ENCODE measurements at regions of chr16 and their contacts with region 1.

Region 1: DNA sequence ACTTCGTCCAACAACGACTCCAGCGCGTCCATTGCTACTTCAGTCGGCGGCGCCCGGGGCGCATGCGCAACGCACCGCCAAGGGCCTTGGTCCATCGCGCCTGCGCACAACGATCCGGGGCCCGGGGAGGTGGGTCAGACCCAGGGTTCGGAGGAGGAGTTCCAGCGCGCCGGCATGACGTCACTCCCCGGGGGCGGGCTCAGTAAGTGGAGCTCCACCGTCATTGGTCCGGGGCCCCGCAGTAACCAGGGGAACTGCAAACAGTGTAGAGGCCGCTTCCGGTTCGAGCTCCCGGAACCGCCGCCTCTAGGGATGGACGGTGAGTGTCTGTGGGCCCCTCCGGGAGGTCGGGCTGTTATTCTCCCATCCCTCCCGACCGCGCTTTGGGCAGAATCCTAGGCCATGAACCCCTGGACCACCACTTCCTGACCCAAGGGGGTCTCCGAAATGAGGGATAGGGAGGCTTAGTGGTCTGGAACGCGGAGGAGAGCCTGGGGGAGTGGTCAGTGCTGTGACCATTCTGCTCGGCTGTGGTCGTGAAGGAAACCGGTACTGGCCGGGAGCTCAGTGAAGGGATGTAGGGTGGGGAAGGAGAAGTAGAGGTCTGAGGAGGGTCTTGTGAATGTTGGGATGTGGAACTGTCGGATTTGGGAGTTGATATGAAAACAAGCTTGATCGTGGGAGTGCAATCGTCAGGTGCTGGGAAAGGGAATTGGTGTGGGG is at the starts of genes GTF3C1 and KATNIP:
- DNase-seq: peak; percentile 100
- H3K4me3 Mint-ChIP-seq: peak within 1 kb of the TSS; percentile 97
- H3K27ac Mint-ChIP-seq: peak within 1 kb of the TSS; percentile 91
- H3K4me1 Mint-ChIP-seq: peaks cover 27% of the 10 kb centered on the region
- H3K27me3 Mint-ChIP-seq: no peaks in the 10 kb centered on the region
- total RNA-seq, gene GTF3C1: 62.2 and 66.9 TPM in 2 replicates
- total RNA-seq, gene KATNIP: 14.2 and 17.0 TPM in 2 replicates

Region 2: DNA sequence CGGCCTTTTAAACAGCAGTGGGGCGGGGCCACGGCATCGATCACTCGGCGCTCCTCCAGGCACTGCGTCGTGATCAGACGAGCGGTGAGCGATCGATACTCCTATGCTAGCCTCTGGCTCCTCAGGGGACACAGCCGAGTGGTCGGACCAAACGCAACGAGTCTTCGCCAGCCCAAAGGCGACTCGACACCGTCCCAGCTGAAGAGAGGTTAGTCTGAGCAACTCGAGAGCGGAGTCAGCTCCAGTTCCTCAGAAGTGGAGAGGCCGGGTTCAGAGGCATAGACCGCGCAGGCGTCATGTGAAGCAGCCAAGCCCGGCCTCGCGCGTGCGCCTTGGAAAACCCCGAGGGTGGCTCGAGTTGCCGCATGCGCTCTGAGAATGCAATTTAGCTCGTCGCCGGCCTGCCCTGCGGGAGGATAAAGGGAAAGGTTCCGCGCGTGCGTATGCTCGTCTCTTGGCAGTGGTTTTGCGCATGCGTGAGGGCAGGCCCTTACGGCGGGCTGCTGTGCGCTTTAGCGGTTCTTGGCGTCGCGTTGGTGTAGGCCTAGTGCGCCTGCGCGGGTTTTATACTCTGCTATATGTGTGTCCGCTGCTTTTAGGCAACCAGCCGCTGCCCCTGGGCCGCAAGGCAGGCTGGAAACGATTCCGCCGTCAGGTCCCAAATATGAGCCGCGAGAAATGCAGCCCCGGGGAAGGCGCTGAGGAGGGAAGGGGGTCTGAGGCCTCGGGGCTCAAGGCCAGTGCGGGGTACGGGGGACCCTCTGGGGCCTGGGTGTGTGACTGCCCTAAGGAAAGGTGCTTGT is 346.4 kb before region 1 on chr16 and contains the start of gene KDM8:
- intact Hi-C with region 1: loop called (anchors 5 kb)
- DNase-seq: peak; percentile 100
- H3K4me3 Mint-ChIP-seq: peak within 1 kb of the TSS; percentile 90
- H3K27ac Mint-ChIP-seq: peak within 1 kb of the TSS; percentile 100
- H3K4me1 Mint-ChIP-seq: peaks cover 44% of the 10 kb centered on the region
- H3K27me3 Mint-ChIP-seq: no peaks in the 10 kb centered on the region
- total RNA-seq, gene KDM8: 13.5 and 17.3 TPM in 2 replicates

Region 3: DNA sequence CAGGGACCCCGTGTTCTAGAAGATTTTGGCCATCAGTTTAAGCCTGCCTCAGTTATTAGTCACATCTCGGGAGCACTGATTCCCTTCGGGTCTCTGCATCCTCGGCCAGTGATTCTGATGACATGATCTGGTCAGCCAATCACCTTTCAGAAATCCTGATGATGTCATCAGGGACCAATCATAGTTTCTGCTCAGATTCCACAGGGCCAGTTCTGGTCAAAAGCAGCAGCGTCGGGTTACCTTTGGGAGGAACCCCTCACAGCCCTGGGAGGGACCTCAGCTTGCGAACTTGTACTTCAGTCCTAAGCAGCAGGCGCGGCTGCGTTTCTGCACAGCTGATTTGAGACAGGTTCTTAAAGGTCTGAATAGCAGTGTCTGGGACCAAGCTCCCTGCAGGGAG is 332.8 kb before region 1 on chr16:
- intact Hi-C with region 1: no loop called
- DNase-seq: no peak
- H3K4me3 Mint-ChIP-seq: no peak overlapping the region
- H3K27ac Mint-ChIP-seq: no peak overlapping the region
- H3K4me1 Mint-ChIP-seq: peaks cover 2% of the 10 kb centered on the region
- H3K27me3 Mint-ChIP-seq: no peaks in the 10 kb centered on the region